K562 (cell line): ENCODE measurements at regions of chr7 and their contacts with region 1.

Region 1: DNA sequence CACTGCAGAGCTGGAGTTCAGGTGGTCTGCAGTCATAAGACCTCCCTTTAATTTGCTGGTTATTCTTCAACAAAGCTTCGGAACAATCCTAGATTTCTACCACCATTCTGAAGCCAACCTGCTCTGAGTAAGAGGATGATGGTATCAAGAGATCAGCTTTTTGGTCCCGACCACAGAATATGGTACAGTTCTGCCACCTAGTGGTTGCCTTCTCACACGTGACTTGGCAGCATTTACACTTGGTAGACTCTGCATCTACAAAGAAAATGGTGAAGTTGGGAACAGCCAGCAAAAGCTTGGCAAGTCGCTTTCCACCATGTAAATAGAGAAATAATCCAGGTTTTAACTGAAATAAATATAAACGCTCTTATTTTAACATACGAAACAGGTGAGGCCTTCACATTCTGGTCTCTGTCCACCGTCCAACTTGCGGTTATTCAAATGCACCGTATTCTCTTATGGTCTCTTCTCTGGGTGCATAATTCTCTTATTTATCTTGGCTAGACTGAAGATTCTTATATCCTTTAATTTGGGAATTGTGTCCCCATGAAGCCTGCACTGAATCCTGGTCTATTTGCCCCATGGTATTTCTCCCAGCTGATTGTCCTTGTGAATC is 173.9 kb upstream of the GRM3 start:
- DNase-seq: peak; percentile 50 to 77 (median 58)
- ATAC-seq: peak; percentile 91
- H3K4me3 ChIP-seq: no peak overlapping the region
- H3K27ac ChIP-seq: no peak overlapping the region
- H3K4me1 ChIP-seq: no peaks in the 10 kb centered on the region
- H3K27me3 ChIP-seq: no peaks in the 10 kb centered on the region
- CTCF ChIP-seq: peak; percentile 56 to 81 (median 71)
- EP300 ChIP-seq: no peak
- POLR2A ChIP-seq: no peak
- RAD21 ChIP-seq: peak; percentile 83 to 85

Region 2: DNA sequence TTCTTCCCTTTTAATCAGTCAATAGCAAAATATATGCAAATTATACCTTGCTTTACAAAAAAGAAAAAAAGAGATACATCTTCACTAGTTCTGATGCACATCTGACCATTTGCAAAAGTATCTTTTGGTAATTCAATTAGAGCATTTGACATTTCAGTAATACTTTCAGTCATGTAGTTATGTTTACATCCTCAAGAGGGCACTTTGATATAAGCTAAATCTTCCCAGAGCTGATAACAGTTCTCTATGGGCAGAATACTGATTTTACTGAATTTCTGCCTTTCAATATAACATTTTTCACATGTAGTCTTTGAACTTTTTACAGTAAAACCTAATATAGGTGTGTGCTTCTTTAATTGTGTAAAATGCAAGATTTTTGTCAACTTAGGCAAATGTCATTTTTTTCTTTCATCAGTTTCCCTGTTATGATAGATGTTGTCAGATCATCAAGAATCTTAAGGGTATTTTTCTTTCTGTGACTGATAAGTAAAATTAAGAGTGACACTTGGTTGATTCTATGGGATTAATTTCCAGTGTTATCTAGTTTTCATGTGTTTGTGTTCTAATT is 579.5 kb before region 1 on chr7:
- CTCF ChIA-PET with region 1: no interaction called
- POLR2A ChIA-PET with region 1: interaction called, 3 read pairs
- in situ Hi-C with region 1: no loop called
- intact Hi-C with region 1: loop called (anchors 5 kb)
- DNase-seq: peak in 2 of 4 experiments; percentile 14 to 16
- ATAC-seq: no peak
- H3K4me3 ChIP-seq: no peak overlapping the region
- H3K27ac ChIP-seq: no peak overlapping the region
- H3K4me1 ChIP-seq: no peaks in the 10 kb centered on the region
- H3K27me3 ChIP-seq: no peaks in the 10 kb centered on the region
- CTCF ChIP-seq: peak in 2 of 3 experiments; percentile 11 to 55; a peak in 3 of 6 replicates
- EP300 ChIP-seq: no peak
- POLR2A ChIP-seq: no peak
- RAD21 ChIP-seq: peak; percentile 61 to 75